WTC11 (cell line): ENCODE measurements at regions of chr1 and their contacts with region 1.

Region 1: DNA sequence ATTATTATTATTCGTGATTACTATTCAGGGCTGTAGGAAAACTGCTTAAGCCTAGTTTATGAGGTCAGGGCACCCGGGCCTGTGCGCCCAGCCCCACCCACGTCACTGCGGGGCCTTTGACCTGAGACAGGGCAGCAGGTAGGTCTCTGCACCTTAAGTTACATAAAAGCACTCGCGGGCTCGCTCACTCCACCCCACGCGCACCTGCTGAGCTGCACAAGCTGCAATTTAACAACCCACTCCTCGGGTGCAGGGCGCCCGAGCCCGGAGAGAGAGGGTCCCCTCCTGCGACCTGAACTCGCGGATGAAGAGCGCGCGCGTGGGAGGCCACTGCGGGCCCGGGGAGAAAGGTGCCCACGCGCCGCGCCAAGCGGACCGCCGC is 477 bp downstream of the ICMT start:
- DNase-seq: no peak
- ATAC-seq: no peak
- H3K4me3 Mint-ChIP-seq: peak overlapping the region; percentile 85
- H3K27ac Mint-ChIP-seq: peak overlapping the region; percentile 84
- H3K4me1 Mint-ChIP-seq: peaks cover 44% of the 10 kb centered on the region
- H3K27me3 Mint-ChIP-seq: no peaks in the 10 kb centered on the region
- CTCF ChIP-seq: no peak

Region 2: DNA sequence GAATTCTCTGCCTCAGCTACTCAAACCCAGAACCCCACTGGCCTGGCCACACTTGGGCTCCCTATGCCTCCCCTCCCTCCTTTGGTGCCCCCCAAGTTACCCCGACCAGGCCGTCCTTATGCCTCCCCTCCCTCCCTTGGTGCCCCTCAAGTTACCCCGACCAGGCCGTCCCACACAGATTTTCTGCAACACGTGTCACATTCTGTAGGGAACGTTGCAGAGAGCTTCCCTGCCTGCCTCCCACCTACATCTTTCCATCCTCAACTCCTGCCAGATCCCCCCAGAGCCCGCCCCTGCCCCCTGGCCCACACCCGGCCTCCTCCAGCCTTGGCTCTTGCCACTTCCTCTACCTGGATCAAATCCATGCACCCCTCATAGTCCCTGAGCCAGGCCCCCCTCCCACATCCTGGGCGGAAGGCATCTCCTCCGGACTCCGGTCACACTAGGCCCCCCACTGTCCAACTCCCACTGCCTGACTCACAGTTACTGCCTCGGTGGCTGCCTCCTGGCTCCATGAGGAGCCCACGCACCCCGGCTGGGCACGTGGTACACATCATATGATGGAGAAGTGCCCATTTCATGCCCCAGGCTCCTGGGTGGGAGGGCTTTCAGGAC is 148.4 kb before region 1 on chr1:
- CTCF ChIA-PET with region 1: no interaction called
- POLR2A ChIA-PET with region 1: no interaction called
- DNase-seq: no peak
- ATAC-seq: no peak
- H3K4me3 Mint-ChIP-seq: no peak overlapping the region
- H3K27ac Mint-ChIP-seq: no peak overlapping the region
- H3K4me1 Mint-ChIP-seq: peaks cover 2% of the 10 kb centered on the region; the same call in 1 of the 2 replicates
- H3K27me3 Mint-ChIP-seq: no peaks in the 10 kb centered on the region
- CTCF ChIP-seq: no peak

Region 3: DNA sequence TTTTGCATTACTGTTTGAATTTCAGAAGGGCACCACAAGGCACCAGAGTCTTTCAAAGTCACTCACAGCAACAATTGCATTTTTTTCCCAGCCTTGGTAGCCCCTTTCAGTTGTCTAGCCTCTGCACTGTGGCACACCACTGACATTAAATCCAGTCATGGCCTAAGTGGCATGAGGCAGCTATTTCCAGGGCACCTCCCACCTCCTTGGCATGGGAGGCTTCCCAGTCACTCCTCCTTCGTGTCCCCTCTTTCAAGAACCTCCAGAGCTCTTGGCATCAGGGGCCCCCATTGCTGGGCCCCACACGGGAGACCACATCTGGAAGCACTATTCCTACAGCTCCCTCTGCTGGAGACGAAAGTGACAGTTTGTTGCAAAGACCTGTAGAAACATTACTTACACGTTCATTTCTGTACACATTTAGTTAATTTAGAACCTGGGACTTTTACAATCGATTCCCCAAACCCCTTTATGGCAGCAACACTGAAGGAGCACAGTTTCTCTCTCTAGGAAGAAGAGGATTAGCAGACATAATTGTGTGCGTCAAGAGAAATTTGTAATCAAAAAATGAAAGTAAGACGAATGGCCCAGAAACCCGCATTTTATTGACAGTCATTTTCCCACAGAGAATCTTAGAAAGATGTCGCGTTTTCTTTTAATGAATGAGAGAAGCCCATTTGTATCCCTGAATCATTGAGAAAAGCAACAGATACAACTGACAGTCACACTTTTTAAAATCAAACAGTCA is 49.5 kb before region 1 on chr1:
- CTCF ChIA-PET with region 1: interaction called, 11 read pairs
- POLR2A ChIA-PET with region 1: no interaction called
- DNase-seq: peak; percentile 62
- ATAC-seq: no peak
- H3K4me3 Mint-ChIP-seq: no peak overlapping the region
- H3K27ac Mint-ChIP-seq: peak overlapping the region; percentile 42
- H3K4me1 Mint-ChIP-seq: peaks cover 52% of the 10 kb centered on the region
- H3K27me3 Mint-ChIP-seq: peaks cover 23% of the 10 kb centered on the region
- CTCF ChIP-seq: peak; percentile 43; the same call in 1 of the 2 replicates

Region 4: DNA sequence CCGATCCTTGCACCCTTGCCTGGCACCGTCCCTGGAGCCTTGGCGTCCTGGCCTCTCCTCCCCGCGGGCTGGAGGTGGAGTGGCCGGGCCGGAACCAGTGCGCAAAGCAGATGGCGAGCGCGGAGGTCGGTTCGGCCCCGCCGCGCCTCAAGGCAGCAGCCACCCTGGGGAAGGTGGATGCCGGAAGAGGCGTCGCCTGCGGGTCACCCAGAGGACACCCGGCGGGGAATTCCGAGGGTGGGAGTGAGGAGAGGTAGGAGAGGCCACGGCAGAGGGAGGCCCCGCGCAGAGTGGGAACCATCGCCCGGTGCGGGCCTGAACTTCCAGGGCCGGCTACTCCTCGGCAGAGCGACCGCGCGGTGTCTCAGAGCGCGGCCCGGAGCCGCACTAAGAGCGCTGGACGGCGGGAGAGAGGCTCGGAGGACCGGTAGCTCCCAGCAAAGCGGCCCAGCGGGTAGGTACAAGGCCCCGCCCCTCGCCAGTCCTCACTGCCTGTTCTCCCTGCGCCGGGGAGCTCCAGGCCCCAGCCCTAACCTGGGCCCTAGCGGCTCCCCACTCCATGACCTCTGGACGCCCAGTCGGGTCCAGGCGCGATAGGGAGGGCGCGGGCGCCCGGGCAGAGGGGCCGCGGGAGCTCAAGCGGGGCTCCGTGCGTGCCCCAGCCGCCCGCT is 29.3 kb before region 1 on chr1 and contains the start of gene RNF207:
- CTCF ChIA-PET with region 1: interaction called, 489 read pairs
- POLR2A ChIA-PET with region 1: interaction called, 10 read pairs
- DNase-seq: peak; percentile 83
- ATAC-seq: peak; percentile 60
- H3K4me3 Mint-ChIP-seq: peak within 1 kb of the TSS; percentile 61
- H3K27ac Mint-ChIP-seq: 0 out of 2 replicates have a peak within 1 kb of the TSS, but pooled peaks have one; percentile 45
- H3K4me1 Mint-ChIP-seq: peaks cover 24% of the 10 kb centered on the region
- H3K27me3 Mint-ChIP-seq: peaks cover 29% of the 10 kb centered on the region
- CTCF ChIP-seq: no peak
- total RNA-seq, gene RNF207: 9.2 to 14.0 TPM (median 12.9 TPM) in 3 replicates

Region 5: GRCh38 chr1:6338695-6339094 is 103.4 kb after region 1 on chr1:
- CTCF ChIA-PET with region 1: interaction called, 17 read pairs
- POLR2A ChIA-PET with region 1: no interaction called
- DNase-seq: no peak
- ATAC-seq: no peak; the same call in 1 of the 2 replicates
- H3K4me3 Mint-ChIP-seq: no peak overlapping the region
- H3K27ac Mint-ChIP-seq: peak overlapping the region; percentile 32; the same call in 1 of the 2 replicates
- H3K4me1 Mint-ChIP-seq: peaks cover 28% of the 10 kb centered on the region
- H3K27me3 Mint-ChIP-seq: no peaks in the 10 kb centered on the region
- CTCF ChIP-seq: no peak

Region 6: GRCh38 chr1:6359216-6360116 is 124.2 kb after region 1 on chr1:
- CTCF ChIA-PET with region 1: interaction called, 21 read pairs
- POLR2A ChIA-PET with region 1: no interaction called
- DNase-seq: peak; percentile 42
- ATAC-seq: peak; percentile 11
- H3K4me3 Mint-ChIP-seq: no peak overlapping the region
- H3K27ac Mint-ChIP-seq: peak overlapping the region; percentile 76
- H3K4me1 Mint-ChIP-seq: peaks cover 44% of the 10 kb centered on the region
- H3K27me3 Mint-ChIP-seq: no peaks in the 10 kb centered on the region
- CTCF ChIP-seq: no peak

Region 7: DNA sequence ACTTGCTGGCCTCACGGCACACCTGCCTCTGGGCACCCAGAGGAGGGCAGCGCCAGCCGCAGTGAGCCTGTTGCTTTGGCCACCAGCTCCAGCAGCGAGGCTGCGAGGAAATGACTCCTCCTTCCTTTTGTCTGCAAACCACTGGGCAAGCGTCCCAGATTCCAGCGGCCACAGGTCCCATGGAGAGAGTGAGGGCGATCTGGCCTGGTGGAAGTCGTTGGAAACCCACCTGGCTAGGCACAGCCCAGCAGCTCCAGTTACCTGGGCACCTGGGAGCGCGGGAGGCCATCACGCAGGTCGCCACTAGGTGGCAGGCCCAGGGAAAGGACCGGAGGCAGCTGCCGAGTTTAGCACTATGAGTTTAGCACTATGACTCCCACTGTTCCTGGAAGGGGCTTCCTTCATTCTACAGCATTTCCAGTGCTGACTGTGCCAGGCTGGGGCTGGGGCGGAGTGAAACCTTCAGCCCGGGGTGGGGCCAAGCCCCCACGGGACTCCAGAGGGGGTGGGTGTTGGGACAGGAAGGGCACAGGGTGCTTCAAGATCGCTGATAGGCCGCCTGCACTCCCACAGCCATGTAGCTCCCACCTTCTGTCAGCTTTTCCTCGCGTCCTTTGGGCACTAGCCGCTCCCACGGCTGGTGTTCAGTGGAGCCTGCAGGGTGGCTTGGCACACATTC is 188.2 kb after region 1 on chr1:
- CTCF ChIA-PET with region 1: interaction called, 22 read pairs
- POLR2A ChIA-PET with region 1: no interaction called
- DNase-seq: peak; percentile 91
- ATAC-seq: peak; percentile 57
- H3K4me3 Mint-ChIP-seq: peak overlapping the region; percentile 60
- H3K27ac Mint-ChIP-seq: no peak overlapping the region
- H3K4me1 Mint-ChIP-seq: peaks cover 6% of the 10 kb centered on the region
- H3K27me3 Mint-ChIP-seq: peaks cover 81% of the 10 kb centered on the region
- CTCF ChIP-seq: peak; percentile 91

Region 8: GRCh38 chr1:6489799-6490180 is 254.5 kb after region 1 on chr1:
- CTCF ChIA-PET with region 1: interaction called, 13 read pairs
- POLR2A ChIA-PET with region 1: no interaction called
- DNase-seq: peak; percentile 87
- ATAC-seq: peak; percentile 46
- H3K4me3 Mint-ChIP-seq: peak overlapping the region; percentile 77
- H3K27ac Mint-ChIP-seq: no peak overlapping the region
- H3K4me1 Mint-ChIP-seq: peaks cover 30% of the 10 kb centered on the region
- H3K27me3 Mint-ChIP-seq: peaks cover 2% of the 10 kb centered on the region; the same call in 1 of the 2 replicates
- CTCF ChIP-seq: peak; percentile 99